ENCODE measurements at regions of chr10 and their contacts with region 1.

Region 1: GRCh38 chr10:46106410-46107255 is 60.6 kb upstream of the MSMB start:
- DNase-seq: peak; percentile 89

Region 2: DNA sequence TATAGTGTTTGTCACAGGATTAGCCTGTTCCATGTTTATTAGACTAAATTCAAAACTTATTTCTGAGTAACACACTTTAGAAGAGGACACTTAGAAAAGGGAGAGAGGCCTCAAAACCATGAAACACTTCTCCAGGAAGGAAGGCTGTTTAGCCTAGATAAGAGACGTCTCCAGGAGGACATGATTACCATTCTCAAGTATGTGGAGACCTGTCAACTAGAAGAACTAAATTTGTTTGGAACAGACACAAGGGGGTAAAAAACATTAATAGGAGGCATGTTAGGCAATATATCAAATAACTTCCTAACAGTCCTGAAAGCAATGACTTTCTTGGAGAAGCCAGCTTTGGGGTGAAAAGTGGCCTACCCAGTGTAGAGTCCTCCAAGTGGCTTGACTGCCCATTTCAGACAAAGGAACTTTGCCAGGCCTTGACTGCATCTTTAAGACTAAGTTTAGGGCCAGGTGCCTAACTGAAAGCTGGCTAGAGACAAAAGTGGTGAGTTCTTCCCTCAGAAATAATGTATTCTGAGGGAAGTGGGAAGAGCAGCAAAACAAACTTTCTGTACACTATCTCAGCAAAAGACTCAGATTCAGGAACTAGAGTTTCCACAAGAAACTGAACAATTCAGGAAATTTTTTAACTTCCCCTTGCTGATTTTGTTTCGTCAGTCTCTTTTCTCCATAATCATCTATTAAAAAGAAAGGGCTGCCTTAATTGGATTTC is 88.0 kb before region 1 on chr10:
- intact Hi-C with region 1: no loop called
- DNase-seq: no peak

Region 3: DNA sequence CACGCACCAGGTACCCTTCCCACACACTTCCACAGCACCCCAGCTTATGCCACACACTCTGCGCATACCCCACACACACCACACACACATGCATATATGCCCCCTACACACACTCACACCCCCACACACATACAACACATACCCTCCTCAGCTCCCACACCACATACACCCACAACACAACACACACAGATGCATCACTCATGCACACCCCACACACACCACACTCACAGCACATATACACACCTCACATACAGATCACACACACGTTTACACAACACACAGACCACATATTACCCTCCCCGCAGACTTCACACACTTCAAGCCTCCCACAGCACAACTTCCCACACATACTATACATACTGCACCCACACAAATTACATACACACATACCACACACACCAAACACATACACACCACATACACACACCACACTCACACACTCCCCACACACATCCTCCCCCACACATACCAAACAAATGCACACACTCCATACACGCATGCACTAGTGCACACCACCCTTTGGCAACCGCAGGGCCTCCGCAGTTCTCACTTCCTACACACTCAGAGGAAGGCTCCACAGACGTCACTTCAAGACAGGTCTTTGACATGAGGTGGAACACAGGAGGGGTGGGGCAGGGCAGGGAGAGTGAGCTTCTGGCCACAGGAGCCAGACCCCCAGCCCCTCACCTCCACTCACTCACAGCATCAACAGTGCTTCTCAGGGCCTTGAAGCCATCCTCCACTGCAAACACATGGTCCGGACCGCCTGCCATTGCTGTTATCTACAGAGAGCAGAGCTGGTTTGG is 161.6 kb after region 1 on chr10:
- intact Hi-C with region 1: loop called in 1 of 2 experiments (anchors 5 kb)
- DNase-seq: peak; percentile 72

Region 4: DNA sequence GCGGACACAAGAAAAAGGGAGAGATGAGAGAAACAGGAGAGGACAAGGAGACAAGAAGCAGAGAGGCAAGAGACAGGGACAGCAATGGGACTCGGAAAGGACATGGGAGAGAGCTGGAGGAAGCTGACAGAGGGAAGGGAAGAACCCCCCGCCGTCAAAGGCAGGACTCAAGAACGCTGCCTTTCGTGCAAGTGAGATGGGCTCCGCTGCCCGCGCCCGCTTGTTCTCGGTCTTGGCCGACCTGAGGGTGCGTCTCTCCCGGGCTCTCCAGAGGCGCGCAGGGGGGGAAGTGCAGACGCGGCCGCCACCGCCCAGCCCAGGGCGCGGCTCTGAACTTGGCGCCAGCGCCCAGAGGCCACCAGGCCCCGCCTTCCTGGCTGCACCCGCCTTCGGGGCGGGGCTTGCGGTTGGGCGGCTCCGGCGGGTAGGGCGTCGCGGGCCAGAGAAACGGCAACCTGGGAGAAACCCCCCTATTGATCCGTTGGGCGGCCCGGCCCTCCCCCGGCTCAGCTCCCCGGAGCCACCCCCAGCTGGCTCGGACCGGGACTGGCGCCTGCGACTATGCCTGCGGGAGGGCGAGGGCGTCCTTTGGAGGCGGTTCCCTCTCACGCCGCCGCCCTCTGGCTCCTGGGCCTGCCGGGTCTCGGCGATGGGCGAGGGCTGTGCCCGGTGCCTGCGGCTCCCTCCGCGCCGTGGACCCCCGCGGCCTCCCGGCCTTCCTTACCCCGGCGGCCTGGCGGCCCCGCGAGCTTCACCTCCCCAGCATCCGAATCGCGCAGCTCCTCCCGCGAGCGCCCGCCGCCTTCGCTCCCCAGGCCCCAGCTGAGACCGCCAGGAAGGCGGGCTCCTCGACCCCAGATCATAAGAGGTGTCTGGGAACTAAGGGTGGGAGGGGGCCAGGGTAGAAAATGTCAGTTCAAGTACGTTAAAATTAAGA is 177.9 kb after region 1 on chr10:
- intact Hi-C with region 1: loop called in 1 of 2 experiments (anchors 5 kb)
- DNase-seq: peak; percentile 96